Right ventricle myocardium superior (tissue), 1 donor: ENCODE measurements at regions of chr1 and their contacts with region 1.

Region 1: GRCh38 chr1:87292684-87293493 is 35.8 kb upstream of the LMO4 start:
- DNase-seq: no peak
- ATAC-seq: peak; percentile 88

Region 2: GRCh38 chr1:86507935-86508582 is 784.8 kb before region 1 on chr1:
- intact Hi-C with region 1: no loop called
- DNase-seq: no peak
- ATAC-seq: no peak

Region 3: DNA sequence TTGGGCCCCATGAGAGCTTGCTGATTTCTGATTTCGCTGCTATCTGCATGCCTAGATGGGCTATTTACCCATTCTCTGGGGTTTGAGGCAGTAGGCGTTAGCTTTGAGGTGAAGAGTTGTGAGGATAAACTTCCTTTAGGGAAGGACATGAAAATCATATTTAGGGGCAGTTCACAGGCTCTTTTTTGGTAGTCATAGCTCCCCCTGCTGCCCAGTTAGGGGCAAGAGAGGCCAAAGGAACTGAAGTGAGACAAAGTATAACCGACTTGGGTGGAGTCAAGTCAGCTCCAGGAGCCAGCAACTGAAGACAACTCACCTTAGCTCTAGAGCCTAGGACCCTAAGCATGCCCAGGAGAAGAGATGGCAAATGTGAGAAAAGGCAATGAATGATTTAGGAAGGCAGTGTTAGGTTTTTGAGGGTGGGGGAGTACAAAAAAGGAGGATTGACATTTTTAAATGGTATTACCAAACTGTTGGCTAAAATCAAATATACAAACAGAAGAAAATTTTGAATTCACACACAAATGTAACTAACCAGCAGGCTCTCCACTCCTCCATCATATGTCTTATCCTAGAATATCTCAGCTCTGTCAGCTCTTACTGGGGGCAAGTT is 660.9 kb after region 1 on chr1:
- intact Hi-C with region 1: loop called (anchors 10 kb)
- DNase-seq: peak; percentile 51
- ATAC-seq: peak; percentile 82

Region 4: DNA sequence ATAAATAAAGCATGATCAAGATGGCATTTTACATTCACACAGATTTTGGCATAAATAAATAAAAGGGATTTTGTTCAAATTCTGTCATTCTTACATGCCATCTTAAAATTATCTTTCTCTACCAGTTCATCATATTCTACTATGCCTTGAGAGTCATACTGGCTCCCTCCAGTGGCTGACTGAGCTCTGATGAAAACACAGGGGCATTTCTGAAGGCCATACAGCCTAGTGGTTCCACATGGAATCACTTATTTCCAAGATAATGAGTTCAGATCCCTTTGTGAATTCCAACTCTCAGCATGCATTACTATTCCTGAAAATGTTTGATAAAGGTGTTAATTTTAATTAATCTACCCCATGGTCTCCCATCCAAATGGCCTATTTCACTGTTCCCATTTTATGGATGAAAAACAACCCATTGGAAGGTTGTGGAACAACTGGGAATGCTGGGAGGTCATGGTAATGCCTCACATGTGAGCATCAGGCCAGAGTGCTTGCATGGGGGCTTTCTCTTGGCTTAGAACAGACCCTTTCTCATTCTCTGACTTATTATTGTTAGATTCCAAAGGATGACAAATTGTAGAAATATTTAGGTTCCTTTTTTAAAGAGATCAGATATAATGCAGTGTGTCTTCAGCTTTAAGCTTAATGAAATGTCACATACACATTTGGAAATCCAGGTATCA is 768.7 kb after region 1 on chr1:
- intact Hi-C with region 1: loop called (anchors 5 kb)
- DNase-seq: no peak
- ATAC-seq: peak; percentile 85

Region 5: DNA sequence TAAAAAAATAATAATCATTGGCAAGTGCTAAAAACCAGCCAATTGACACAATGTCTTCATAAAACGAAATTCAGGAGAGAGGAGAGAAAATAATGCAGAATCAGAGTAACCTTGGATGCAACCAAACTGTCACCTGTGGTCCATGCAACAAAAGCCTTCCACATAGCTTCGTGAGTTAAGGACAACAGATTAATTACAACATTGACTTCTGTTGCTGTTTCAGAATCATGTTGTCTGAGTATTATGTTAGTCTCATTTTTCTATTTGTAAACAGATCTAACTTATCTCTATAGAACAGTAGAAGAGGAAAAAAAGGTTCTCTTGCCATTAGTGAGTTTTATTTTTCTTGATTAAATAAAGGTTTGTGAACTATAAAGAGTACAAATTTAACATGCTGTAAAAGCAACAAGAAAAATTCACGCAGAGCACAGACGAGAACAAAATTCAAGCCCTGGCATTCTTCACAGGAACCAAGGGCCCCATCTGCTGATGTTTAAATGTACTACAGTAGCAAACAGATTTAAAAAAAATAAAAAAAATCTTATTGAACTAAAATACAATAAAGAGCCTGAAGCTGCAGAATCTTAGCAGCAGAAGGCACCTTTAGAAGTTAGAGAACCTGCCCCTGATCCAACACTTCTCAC is 1010.1 kb after region 1 on chr1:
- intact Hi-C with region 1: loop called (anchors 10 kb)
- DNase-seq: no peak
- ATAC-seq: peak; percentile 52